IMR-90 (cell line): ENCODE measurements at regions of chr12 and their contacts with region 1.

Region 1: DNA sequence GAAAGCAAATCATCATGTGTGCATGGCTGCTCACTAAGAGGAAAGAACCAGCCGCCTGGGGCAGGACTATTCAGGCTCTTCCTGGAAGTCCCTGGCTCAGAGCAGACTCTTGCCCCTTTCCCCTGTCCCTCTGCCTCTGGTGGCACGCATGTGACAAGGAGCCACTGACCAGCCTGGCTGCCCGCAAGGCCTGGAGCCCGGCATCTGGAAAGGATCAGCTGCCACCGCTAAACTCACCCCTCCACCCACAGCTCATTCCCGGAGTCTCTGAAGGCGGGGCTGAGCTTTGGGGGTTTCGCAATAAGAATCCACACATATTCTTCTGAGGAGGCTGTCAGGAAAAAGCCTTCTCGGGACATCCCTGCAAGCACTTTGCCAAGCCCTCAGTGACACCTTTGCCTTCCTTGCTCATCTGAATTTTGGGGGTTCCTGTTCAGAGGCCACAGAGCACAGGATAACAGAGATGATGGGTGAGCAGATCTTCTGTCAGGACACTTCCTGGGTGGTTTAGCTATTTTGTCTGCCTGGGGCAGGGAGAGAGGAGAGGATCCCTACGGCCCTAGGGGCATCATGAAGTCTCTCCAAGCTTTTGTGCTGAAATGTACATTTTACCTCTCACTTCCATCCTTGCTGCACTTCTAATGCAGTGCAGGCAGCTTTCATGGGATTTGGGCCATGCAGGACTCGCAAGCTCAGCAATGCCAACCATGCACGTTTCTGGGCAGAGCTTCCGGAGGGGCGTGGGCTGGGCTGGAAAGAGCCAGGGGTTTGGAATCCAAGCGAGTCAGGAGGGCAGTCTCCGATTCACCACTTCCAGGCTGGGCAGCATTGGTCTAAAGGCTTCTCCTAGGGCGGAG is 124.8 kb upstream of the MAP1LC3B2 start:
- DNase-seq: peak; percentile 92
- ATAC-seq: peak; percentile 93
- H3K4me3 ChIP-seq: peak overlapping the region; percentile 39
- H3K27ac ChIP-seq: peak overlapping the region; percentile 86
- H3K4me1 ChIP-seq: peaks cover 11% of the 10 kb centered on the region
- H3K27me3 ChIP-seq: no peaks in the 10 kb centered on the region
- CTCF ChIP-seq: no peak
- POLR2A ChIP-seq: no peak
- RAD21 ChIP-seq: peak; percentile 39

Region 2: DNA sequence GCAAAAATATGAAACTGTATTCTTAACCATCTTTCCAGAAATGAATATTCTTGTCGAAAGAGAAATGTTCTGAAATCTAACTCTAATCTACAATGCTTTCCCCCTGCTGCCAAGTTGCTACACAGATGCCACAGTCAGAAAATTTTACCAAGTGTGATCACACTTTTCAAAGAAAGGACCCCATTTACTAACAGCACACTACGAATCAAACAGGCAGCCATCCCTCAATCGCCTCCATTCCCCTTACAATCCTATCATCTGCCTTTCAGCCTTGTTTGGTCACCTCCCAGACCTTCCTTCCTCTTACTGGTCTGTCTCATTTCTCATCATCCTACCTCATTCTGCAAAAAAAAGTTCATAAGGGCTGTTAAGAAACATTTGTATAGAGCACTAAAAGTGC is 347.0 kb before region 1 on chr12:
- CTCF ChIA-PET with region 1: no interaction called
- POLR2A ChIA-PET with region 1: no interaction called
- dilution Hi-C with region 1: no loop called
- in situ Hi-C with region 1: no loop called
- intact Hi-C with region 1: no loop called
- DNase-seq: no peak
- ATAC-seq: no peak
- H3K4me3 ChIP-seq: no peak overlapping the region
- H3K27ac ChIP-seq: no peak overlapping the region
- H3K4me1 ChIP-seq: peaks cover 3% of the 10 kb centered on the region
- H3K27me3 ChIP-seq: no peaks in the 10 kb centered on the region
- CTCF ChIP-seq: no peak
- POLR2A ChIP-seq: no peak
- RAD21 ChIP-seq: no peak

Region 3: GRCh38 chr12:116525418-116526001 is 91.1 kb after region 1 on chr12:
- CTCF ChIA-PET with region 1: no interaction called
- POLR2A ChIA-PET with region 1: no interaction called
- dilution Hi-C with region 1: no loop called
- in situ Hi-C with region 1: no loop called
- intact Hi-C with region 1: loop called (anchors 5 kb)
- DNase-seq: peak; percentile 92
- ATAC-seq: peak; percentile 92
- H3K4me3 ChIP-seq: peak overlapping the region; percentile 16; the same call in 1 of the 2 replicates
- H3K27ac ChIP-seq: peak overlapping the region; percentile 90
- H3K4me1 ChIP-seq: peaks cover 12% of the 10 kb centered on the region
- H3K27me3 ChIP-seq: no peaks in the 10 kb centered on the region
- CTCF ChIP-seq: no peak
- POLR2A ChIP-seq: peak; percentile 46; the same call in 1 of the 2 replicates
- RAD21 ChIP-seq: peak; percentile 26; the same call in 1 of the 2 replicates

Region 4: GRCh38 chr12:116599285-116600136 is 165.1 kb after region 1 on chr12:
- CTCF ChIA-PET with region 1: no interaction called
- POLR2A ChIA-PET with region 1: no interaction called
- dilution Hi-C with region 1: no loop called
- in situ Hi-C with region 1: no loop called
- intact Hi-C with region 1: loop called (anchors 5 kb)
- DNase-seq: peak; percentile 58
- ATAC-seq: peak; percentile 93
- H3K4me3 ChIP-seq: no peak overlapping the region
- H3K27ac ChIP-seq: peak overlapping the region; percentile 61
- H3K4me1 ChIP-seq: peaks cover 11% of the 10 kb centered on the region
- H3K27me3 ChIP-seq: no peaks in the 10 kb centered on the region; the same call in 1 of the 2 replicates
- CTCF ChIP-seq: peak; percentile 61
- POLR2A ChIP-seq: no peak
- RAD21 ChIP-seq: peak; percentile 64